IMR-90 (cell line): ENCODE measurements at regions of chr17 and their contacts with region 1.

Region 1: DNA sequence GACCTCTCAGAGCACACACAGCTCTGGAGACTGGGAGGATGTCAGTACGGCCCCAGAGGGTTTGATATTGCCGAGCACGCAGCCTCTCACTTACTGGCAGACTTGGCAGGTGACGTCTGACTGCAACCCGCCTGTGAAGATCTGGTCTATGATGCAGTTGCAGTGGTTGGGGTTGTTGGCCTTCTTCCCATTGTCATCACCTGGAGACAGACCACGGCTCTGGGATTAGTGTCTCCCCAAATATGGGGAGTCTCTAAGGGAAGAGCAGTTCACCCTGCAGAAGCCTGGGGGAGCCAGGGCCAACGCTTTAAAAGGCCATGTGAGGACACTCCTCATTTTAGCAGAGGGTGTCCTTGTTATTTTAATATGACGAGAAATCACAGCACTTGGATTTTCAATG is 30.1 kb downstream of the USP22 start:
- DNase-seq: no peak
- ATAC-seq: no peak
- H3K4me3 ChIP-seq: no peak overlapping the region
- H3K27ac ChIP-seq: no peak overlapping the region
- H3K4me1 ChIP-seq: no peaks in the 10 kb centered on the region
- H3K27me3 ChIP-seq: no peaks in the 10 kb centered on the region
- CTCF ChIP-seq: no peak
- POLR2A ChIP-seq: no peak
- RAD21 ChIP-seq: no peak

Region 2: GRCh38 chr17:20908373-20909273 is 104.1 kb before region 1 on chr17:
- CTCF ChIA-PET with region 1: no interaction called
- POLR2A ChIA-PET with region 1: no interaction called
- dilution Hi-C with region 1: no loop called
- in situ Hi-C with region 1: no loop called
- intact Hi-C with region 1: no loop called
- DNase-seq: peak; percentile 53
- ATAC-seq: peak; percentile 100
- H3K4me3 ChIP-seq: peak overlapping the region; percentile 63
- H3K27ac ChIP-seq: peak overlapping the region; percentile 78
- H3K4me1 ChIP-seq: no peaks in the 10 kb centered on the region
- H3K27me3 ChIP-seq: no peaks in the 10 kb centered on the region
- CTCF ChIP-seq: peak; percentile 59
- POLR2A ChIP-seq: no peak
- RAD21 ChIP-seq: peak; percentile 46

Region 3: GRCh38 chr17:20966870-20967269 is 45.9 kb before region 1 on chr17:
- CTCF ChIA-PET with region 1: no interaction called
- POLR2A ChIA-PET with region 1: no interaction called
- dilution Hi-C with region 1: no loop called
- in situ Hi-C with region 1: no loop called
- intact Hi-C with region 1: loop called (anchors 1 kb)
- DNase-seq: no peak
- ATAC-seq: no peak
- H3K4me3 ChIP-seq: no peak overlapping the region
- H3K27ac ChIP-seq: no peak overlapping the region
- H3K4me1 ChIP-seq: no peaks in the 10 kb centered on the region
- H3K27me3 ChIP-seq: peaks cover 48% of the 10 kb centered on the region
- CTCF ChIP-seq: no peak
- POLR2A ChIP-seq: no peak
- RAD21 ChIP-seq: no peak

Region 4: DNA sequence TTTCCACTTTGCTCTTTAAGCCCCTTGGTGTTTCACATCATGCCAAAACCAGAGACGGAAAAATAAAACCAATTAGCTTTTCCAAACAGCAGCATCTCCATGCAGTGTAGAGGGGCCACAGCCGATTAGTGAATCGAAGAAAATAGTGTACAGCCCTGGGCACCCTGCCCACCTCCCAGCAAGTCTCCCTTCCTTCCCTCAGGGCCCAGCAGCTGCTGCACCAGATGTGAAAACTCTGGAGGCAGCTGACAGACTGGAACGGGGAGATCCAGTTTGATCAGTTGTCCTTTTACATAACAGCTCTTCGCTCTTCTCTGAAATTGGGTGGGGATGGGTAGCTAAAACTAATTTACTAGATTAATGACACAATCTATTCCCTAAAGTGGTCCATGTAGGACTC is 182.0 kb after region 1 on chr17:
- CTCF ChIA-PET with region 1: no interaction called
- POLR2A ChIA-PET with region 1: no interaction called
- dilution Hi-C with region 1: no loop called
- in situ Hi-C with region 1: no loop called
- intact Hi-C with region 1: no loop called
- DNase-seq: peak; percentile 43
- ATAC-seq: no peak; the same call in 1 of the 2 replicates
- H3K4me3 ChIP-seq: no peak overlapping the region
- H3K27ac ChIP-seq: no peak overlapping the region
- H3K4me1 ChIP-seq: peaks cover 9% of the 10 kb centered on the region; the same call in 1 of the 2 replicates
- H3K27me3 ChIP-seq: no peaks in the 10 kb centered on the region
- CTCF ChIP-seq: no peak
- POLR2A ChIP-seq: no peak
- RAD21 ChIP-seq: no peak